K562 (cell line): ENCODE measurements at regions of chr10 and their contacts with region 1.

Region 1: DNA sequence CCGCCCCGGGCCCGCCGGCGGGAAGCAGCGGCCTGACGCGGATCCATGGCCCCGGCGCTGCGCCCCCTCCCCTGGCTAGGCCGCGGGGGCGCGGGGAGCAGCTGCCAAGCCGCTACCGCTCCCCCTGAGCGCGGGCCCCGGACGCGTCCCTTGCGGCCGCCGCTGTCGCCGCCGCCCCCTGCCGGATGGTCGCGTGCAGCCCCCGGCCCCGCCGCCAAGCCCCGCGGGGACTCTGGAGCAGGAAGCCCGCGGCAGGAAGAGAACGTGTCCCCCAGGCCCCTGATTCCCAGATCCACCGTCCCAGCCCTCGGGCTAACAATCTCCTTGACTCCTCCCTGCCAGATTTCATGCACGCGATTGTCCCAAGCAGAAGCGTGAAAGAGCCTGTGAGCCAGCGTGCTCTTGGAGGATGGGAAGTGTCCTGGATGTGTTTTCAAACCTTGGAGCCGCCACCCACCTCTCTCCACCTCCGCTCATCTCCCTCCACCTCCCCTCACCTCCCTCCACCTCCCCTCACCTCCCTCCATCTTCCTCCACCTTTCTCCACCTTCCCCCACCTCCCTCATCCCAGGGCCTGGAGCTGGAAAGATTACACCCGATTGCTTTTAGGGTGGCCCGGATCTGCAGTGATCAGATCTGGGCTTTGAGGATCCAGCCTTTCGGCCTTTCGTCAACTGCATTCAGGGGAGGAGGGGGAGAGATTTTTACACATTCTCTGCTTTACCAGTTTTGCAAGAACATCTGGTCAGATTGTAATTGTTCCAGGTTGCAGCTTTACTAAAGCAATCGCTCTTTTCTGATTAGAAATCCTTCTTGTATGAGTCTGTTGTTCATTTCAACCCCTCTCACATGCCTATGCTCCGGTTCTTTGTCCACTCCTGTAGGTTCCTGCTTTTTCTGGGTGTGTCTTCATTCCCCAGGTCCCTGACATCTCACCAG is 570 bp upstream of the PRTFDC1 start:
- DNase-seq: peak; percentile 64 to 80 (median 76)
- ATAC-seq: peak; percentile 80
- H3K4me3 ChIP-seq: peak overlapping the region; percentile 52
- H3K27ac ChIP-seq: peak overlapping the region; percentile 85
- H3K4me1 ChIP-seq: peaks cover 18 to 21% of the 10 kb centered on the region in 2 experiments; a peak in 4 of 5 replicates
- H3K27me3 ChIP-seq: no peaks in the 10 kb centered on the region
- CTCF ChIP-seq: peak; percentile 35 to 60 (median 37); a peak in 3 of 6 replicates
- EP300 ChIP-seq: no peak
- POLR2A ChIP-seq: no peak; the same call in 1 of the 2 replicates
- RAD21 ChIP-seq: peak; percentile 22 to 47

Region 2: DNA sequence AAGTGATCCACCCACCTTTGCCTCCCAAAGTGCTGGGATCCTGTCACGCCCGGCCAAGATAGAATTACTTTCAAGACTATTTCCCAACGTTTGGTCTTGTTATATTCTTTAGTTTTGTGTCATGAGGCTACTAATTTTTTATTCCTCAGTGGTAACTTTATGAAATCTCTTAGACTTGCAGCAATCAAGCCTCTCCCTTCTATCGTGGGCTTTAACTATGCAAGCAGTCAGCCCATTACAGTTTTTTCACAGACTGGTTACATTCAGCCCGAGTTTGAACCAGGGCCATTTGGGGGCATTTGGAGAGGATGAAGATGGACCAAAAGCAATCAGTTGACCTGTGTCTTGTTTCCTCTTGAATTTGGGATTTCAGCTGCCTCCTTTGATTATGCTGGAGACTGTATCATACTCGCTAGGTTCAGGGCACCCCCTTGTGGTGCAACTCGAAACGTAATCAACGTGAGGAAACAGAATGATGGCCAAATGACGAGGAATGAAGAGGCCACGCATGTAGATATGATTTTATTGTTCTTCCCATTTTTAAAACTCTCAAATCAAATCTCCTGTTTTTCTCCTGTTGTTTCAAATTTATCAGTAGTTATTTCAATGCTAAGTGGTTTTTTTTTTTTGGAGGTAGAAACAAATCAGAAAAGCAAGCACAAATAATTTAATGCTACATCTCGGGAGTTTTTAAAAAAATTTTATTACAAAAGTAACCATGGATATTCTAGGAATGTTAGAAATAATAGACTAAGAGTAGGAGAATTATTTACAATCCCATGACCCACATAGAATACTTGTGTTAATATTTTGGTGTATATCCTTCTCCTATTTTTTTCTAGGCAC is 592.5 kb before region 1 on chr10:
- CTCF ChIA-PET with region 1: no interaction called
- POLR2A ChIA-PET with region 1: no interaction called
- in situ Hi-C with region 1: no loop called
- intact Hi-C with region 1: no loop called
- DNase-seq: peak; percentile 39 to 57 (median 44)
- ATAC-seq: peak; percentile 88
- H3K4me3 ChIP-seq: no peak overlapping the region
- H3K27ac ChIP-seq: no peak overlapping the region
- H3K4me1 ChIP-seq: no peaks in the 10 kb centered on the region
- H3K27me3 ChIP-seq: 0 out of 5 replicates have a peak, but pooled peaks cover 0 to 8% of the 10 kb centered on the region in 2 experiments
- CTCF ChIP-seq: peak; percentile 46 to 67 (median 65)
- EP300 ChIP-seq: no peak
- POLR2A ChIP-seq: no peak
- RAD21 ChIP-seq: peak; percentile 37 to 59; a peak in 3 of 4 replicates

Region 3: GRCh38 chr10:24642622-24643417 is 310.2 kb before region 1 on chr10:
- CTCF ChIA-PET with region 1: no interaction called
- POLR2A ChIA-PET with region 1: no interaction called
- in situ Hi-C with region 1: loop called (anchors 10 kb)
- intact Hi-C with region 1: loop called (anchors 5 kb)
- DNase-seq: peak; percentile 21 to 72 (median 34)
- ATAC-seq: peak; percentile 92
- H3K4me3 ChIP-seq: no peak overlapping the region
- H3K27ac ChIP-seq: no peak overlapping the region
- H3K4me1 ChIP-seq: peaks cover 0 to 29% of the 10 kb centered on the region in 2 experiments; a peak in 4 of 5 replicates
- H3K27me3 ChIP-seq: no peaks in the 10 kb centered on the region
- CTCF ChIP-seq: peak; percentile 61 to 84 (median 80)
- EP300 ChIP-seq: no peak
- POLR2A ChIP-seq: no peak
- RAD21 ChIP-seq: peak; percentile 89 to 93

Region 4: DNA sequence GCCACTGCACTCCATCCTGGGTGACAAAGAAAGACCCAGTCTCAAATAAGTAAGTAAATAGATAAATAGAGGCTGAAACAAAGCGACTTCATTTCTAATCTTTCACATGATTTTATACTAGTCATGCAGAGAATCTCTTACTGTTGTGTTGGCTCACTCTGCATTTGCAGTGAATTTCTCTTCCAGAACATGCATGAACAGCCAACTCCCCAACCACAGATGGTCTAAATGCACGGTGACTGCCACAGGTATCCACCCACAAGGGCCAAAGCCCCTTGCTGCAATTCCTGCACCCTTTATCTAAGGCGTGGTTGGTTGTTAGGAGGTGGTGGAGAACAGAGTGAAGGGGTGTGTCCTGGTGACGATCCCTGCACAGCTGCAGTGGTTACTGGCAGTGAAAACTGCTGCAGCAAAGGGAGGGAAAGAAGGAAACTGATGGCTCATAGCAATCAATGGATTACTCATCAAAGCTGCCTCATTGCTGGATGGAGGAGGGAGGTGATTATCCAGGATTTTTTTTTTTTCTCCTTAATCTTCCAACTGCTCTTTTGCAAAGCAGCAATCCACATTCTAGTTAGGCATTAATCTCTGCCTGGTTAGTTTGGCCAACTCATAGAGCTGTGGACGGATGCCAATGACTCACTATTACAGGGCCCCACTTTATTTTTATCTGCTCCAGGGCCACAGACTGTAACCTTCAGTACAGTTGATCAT is 51.1 kb before region 1 on chr10:
- CTCF ChIA-PET with region 1: no interaction called
- POLR2A ChIA-PET with region 1: no interaction called
- in situ Hi-C with region 1: no loop called
- intact Hi-C with region 1: loop called (anchors 5 kb)
- DNase-seq: peak; percentile 72 to 91 (median 76)
- ATAC-seq: peak; percentile 80
- H3K4me3 ChIP-seq: peak overlapping the region; percentile 4; the same call in 1 of the 2 replicates
- H3K27ac ChIP-seq: peak overlapping the region; percentile 86
- H3K4me1 ChIP-seq: peaks cover 21 to 55% of the 10 kb centered on the region in 2 experiments
- H3K27me3 ChIP-seq: no peaks in the 10 kb centered on the region
- CTCF ChIP-seq: no peak
- EP300 ChIP-seq: peak; percentile 81; the same call in 1 of the 2 replicates
- POLR2A ChIP-seq: no peak
- RAD21 ChIP-seq: 0 out of 4 replicates have a peak, but pooled peaks of 1 of the 2 experiments have one; percentile 1

Region 5: GRCh38 chr10:24989867-24990266 is 36.9 kb after region 1 on chr10:
- CTCF ChIA-PET with region 1: no interaction called
- POLR2A ChIA-PET with region 1: interaction called, 4 read pairs
- in situ Hi-C with region 1: no loop called
- intact Hi-C with region 1: loop called (anchors 5 kb)
- DNase-seq: no peak
- ATAC-seq: no peak
- H3K4me3 ChIP-seq: no peak overlapping the region
- H3K27ac ChIP-seq: no peak overlapping the region
- H3K4me1 ChIP-seq: peaks cover 9 to 11% of the 10 kb centered on the region in 2 experiments
- H3K27me3 ChIP-seq: no peaks in the 10 kb centered on the region
- CTCF ChIP-seq: peak in 1 of 3 experiments; percentile 31; a peak in 2 of 6 replicates
- EP300 ChIP-seq: no peak
- POLR2A ChIP-seq: no peak
- RAD21 ChIP-seq: peak; percentile 20 to 52; a peak in 3 of 4 replicates

Region 6: DNA sequence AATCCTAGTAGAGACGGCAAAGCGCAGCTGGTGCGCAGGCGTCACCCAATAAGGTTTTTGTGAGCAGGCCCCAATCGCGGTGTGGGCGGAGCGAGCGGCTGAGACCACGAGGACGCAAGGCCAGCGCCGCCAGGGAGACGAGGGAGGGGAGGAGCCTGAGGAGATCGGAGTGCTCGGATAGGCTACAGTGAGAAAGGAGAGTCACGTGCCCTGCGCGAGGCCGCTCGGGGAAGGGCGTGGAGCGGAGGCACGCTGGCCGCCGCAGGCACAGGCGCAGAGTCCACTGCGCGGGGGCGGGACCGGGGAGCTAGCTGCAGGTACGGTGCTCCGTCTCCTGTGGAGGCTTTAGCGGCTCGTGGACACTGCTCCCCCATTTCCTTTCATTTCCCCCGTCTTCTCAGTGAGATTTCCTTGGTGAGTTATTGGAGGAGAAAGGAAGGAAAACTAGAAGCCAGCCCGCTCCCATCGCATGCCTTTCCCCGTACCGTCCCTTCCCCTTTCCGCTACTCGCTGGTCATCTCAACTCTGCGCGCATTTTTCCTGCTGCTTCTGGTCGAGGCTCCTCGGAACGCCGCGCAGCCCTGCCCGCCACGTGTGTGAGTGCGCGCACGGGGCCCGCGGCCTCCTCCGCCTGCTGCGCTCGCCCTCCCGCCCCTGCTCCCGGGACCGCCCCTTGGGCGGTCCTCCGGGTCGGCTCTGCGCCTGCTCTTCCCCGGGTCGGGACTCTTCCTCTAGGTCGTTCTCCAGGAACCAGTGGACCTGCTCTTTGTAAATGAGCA is 63.6 kb after region 1 on chr10 and contains the start of gene THNSL1:
- CTCF ChIA-PET with region 1: no interaction called
- POLR2A ChIA-PET with region 1: interaction called, 4 read pairs
- in situ Hi-C with region 1: no loop called
- intact Hi-C with region 1: loop called (anchors 2 kb)
- DNase-seq: peak; percentile 96 to 99 (median 97)
- ATAC-seq: peak; percentile 99
- H3K4me3 ChIP-seq: peak within 1 kb of the TSS; percentile 49
- H3K27ac ChIP-seq: peak within 1 kb of the TSS; percentile 94
- H3K4me1 ChIP-seq: peaks cover 7 to 9% of the 10 kb centered on the region in 2 experiments
- H3K27me3 ChIP-seq: no peaks in the 10 kb centered on the region
- CTCF ChIP-seq: 0 out of 6 replicates have a peak, but pooled peaks of 1 of the 3 experiments have one; percentile 2
- EP300 ChIP-seq: no peak; the same call in 1 of the 2 replicates
- POLR2A ChIP-seq: peak; percentile 94
- RAD21 ChIP-seq: no peak
- polyA plus RNA-seq, gene THNSL1: 5.9 to 7.6 TPM